ENCODE measurements at regions of chr3 and their contacts with region 1.

Region 1: GRCh38 chr3:39101022-39101689 is 6.3 kb downstream of the GORASP1 start:
- DNase-seq: peak in 1 of 2 donors; percentile 48
- ATAC-seq: peak; percentile 69

Region 2: DNA sequence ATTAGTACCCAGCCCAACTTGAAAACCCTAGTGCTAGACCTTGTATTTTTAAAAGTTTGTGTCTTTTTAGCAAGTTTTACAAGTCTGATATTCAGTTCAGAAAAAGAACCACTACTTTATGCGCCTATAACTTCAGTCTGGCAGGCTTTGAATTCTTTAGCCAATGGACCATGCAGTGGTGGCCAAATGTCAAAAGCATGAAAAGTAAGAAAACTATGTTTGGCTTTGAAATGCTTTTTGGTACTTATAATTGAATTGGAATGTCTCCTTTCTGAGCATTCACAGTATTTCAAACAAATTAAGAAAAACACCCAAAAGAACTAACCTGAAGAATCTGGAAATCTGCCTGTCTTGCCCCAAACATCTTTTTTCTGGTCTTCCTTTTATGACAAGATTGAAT is 36.5 kb before region 1 on chr3:
- intact Hi-C with region 1: loop called in 1 of 2 experiments (anchors 5 kb)
- DNase-seq: no peak
- ATAC-seq: no peak

Region 3: DNA sequence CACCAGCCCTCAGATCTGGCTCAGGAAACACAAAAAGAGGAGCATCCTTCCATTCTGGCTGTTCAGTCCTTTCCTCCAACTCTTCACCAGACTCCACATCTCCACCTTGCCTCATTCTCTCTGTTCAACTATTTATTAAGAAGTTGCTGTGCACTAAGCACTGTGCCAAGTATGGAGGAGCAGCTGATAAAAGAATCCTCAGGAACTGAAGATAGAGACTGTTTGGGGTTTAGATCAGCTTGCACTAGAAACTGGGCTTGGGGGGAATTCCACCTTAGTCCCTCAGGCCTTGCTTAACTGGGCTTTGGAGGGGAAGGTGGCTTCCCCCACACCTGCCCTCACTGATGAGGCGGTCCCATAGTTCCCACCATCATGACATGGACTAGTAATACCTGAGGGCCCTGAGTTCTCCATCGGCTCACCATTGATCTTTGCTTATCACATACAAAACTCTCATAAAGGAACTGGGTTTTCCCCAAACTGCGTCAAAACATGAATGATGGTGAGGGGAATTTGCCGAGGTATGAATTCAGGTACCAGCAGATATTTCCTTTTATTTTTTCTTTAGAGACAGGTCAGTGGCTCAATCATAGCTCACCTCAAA is 226.7 kb after region 1 on chr3:
- intact Hi-C with region 1: no loop called
- DNase-seq: no peak
- ATAC-seq: no peak

Measured in left colon (tissue), 2 donors.